Activated naive CD8-positive, alpha-beta T cell treated with anti-CD3 and anti-CD28 coated beads, Interleukin-2, amount 10 ng/mL, durations not matched to agents 7 days and 5 days (primary cell): ENCODE measurements at regions of chr1 and their contacts with region 1.

Region 1: GRCh38 chr1:42941640-42942330 is 16.9 kb downstream of the SLC2A1 start:
- DNase-seq: no peak
- ATAC-seq: no peak
- H3K4me3 Mint-ChIP-seq: peak overlapping the region; percentile 50
- H3K27ac Mint-ChIP-seq: peak overlapping the region; percentile 85
- H3K4me1 Mint-ChIP-seq: peaks cover 92% of the 10 kb centered on the region
- H3K27me3 Mint-ChIP-seq: no peaks in the 10 kb centered on the region

Region 2: GRCh38 chr1:42904434-42904833 is 37.4 kb before region 1 on chr1:
- POLR2A ChIA-PET with region 1: no interaction called
- DNase-seq: no peak
- ATAC-seq: no peak
- H3K4me3 Mint-ChIP-seq: no peak overlapping the region
- H3K27ac Mint-ChIP-seq: no peak overlapping the region
- H3K4me1 Mint-ChIP-seq: no peaks in the 10 kb centered on the region
- H3K27me3 Mint-ChIP-seq: peaks cover 6% of the 10 kb centered on the region

Region 3: GRCh38 chr1:42952303-42953001 is 10.7 kb after region 1 on chr1:
- POLR2A ChIA-PET with region 1: interaction called, 35 read pairs
- DNase-seq: no peak
- ATAC-seq: peak; percentile 67
- H3K4me3 Mint-ChIP-seq: peak overlapping the region; percentile 78
- H3K27ac Mint-ChIP-seq: peak overlapping the region; percentile 85
- H3K4me1 Mint-ChIP-seq: peaks cover 72% of the 10 kb centered on the region
- H3K27me3 Mint-ChIP-seq: no peaks in the 10 kb centered on the region

Region 4: DNA sequence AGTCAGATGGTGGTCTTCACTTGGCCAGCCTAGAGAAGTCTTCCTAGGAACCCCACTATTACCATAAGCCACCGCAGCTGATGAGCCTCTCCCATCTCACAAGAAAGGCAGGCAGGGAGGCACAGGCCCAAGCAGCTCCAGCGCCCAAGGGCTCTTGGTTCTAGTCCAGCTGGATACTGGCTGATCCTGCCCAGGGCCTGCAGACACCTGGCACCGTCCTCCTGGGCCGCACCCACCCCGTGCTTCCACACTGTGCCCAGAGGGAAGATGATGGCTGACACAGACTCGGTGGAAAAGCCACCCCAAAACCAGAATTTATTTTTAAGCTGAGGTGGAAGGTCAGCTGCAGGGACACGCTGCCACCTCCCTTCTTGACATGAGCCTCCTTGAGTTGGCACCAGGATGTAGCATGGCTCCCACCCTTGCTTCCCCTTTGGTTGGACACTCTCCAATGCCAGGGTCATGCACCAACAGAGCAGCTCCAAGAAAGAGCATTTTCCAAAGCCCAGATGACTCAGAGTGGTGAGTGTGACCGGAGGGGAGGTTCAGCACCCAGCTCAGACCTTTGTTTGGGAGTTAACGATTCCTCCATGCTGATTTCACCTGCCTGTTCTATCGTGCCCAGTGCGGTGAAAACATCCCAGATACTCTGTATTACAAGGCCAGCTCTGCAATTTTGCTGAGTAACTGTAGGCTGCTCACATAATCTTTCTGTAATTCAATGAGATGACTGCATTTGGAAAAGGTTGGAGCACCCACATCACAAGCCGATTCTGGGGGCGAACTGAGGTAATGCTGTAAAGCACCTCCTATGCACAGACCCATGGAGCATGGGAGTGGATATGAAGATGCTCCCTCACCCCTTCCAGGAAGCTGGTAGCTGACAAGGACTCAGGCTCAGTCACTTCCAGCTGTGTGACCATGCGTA is 80.0 kb after region 1 on chr1:
- POLR2A ChIA-PET with region 1: no interaction called
- DNase-seq: no peak
- ATAC-seq: no peak
- H3K4me3 Mint-ChIP-seq: no peak overlapping the region
- H3K27ac Mint-ChIP-seq: no peak overlapping the region
- H3K4me1 Mint-ChIP-seq: no peaks in the 10 kb centered on the region
- H3K27me3 Mint-ChIP-seq: peaks cover 11% of the 10 kb centered on the region

Region 5: GRCh38 chr1:43048601-43049011 is 106.8 kb after region 1 on chr1:
- POLR2A ChIA-PET with region 1: no interaction called
- DNase-seq: no peak
- ATAC-seq: no peak
- H3K4me3 Mint-ChIP-seq: no peak overlapping the region
- H3K27ac Mint-ChIP-seq: no peak overlapping the region
- H3K4me1 Mint-ChIP-seq: no peaks in the 10 kb centered on the region
- H3K27me3 Mint-ChIP-seq: peaks cover 20% of the 10 kb centered on the region

Region 6: DNA sequence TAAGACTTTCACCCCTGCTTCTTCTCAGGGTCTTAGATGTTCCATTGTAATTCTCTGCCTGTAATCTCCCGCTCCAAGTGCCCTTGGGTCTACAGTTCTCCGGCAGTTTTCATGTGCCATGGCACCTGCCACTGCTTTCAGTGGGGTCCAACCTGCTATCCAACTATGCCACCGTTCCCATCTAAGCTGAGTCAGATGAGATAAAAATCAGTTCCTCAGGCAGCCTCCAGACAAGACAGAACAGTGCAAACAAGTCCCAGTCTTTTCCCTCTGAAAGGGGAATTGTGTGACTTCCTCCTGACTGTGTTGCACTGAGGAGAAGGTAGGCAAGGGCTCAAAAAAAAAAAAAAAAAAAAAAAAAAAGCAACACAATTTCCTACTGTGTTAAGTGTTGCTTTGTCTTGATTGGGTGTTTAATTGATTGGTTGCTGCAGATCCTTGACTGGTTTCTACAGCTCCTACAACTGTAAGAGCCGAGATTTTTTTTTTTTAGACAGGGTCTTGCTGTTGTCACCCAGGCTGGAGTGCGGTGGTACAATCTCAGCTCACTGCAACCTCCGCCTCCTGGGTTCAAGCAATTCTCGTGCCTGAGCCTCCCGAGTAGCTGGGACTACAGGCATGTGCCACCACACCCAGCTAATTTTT is 179.6 kb after region 1 on chr1:
- POLR2A ChIA-PET with region 1: no interaction called
- DNase-seq: no peak
- ATAC-seq: no peak
- H3K4me3 Mint-ChIP-seq: no peak overlapping the region
- H3K27ac Mint-ChIP-seq: no peak overlapping the region
- H3K4me1 Mint-ChIP-seq: peaks cover 1% of the 10 kb centered on the region
- H3K27me3 Mint-ChIP-seq: peaks cover 27% of the 10 kb centered on the region